Posterior vena cava (tissue), 2 donors: ENCODE measurements at regions of chr5 and their contacts with region 1.

Region 1: GRCh38 chr5:12413585-12413984 is 509.3 kb upstream of the CTNND2 start:
- DNase-seq: no peak

Region 2: GRCh38 chr5:12313602-12314001 is 100.0 kb before region 1 on chr5:
- intact Hi-C with region 1: no loop called
- DNase-seq: no peak

Region 3: DNA sequence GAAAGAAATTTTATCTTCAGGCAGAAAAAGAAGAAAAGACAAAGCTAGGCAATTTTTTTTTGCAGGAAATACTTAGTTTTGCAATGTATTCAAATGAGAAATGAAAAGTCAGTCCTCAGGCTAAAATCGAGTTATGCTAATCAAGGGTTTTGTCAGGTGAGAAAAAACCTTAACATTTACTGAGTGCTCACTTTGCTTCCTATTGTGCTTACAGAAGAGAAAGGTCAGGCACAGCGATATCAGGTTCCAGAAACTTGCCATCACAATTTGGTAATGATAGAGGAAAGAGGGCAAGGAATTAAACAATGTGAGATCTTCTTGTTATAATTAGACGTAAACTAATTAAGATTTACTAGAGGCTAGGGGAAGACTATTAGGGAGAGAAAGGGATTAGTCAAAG is 77.6 kb before region 1 on chr5:
- intact Hi-C with region 1: loop called in 1 of 2 experiments (anchors 2 kb)
- DNase-seq: no peak

Region 4: DNA sequence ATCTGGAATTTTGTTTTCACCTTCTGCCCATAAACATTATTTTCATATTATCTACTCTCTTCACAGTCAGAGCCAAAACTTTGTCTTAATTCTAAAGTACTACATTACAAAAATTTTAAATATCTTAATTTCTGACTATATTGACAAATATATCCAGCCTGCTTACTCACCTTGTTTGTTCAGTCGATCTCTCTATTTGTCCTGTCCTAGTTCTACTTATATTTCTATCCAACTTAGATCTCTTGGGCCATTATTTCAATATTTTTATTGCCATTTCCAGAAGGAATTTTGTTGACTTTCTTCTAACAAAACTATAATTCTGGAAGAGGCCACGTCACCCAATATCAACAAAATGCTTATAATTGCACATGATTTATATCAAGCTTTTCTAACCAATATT is 143.4 kb after region 1 on chr5:
- intact Hi-C with region 1: no loop called
- DNase-seq: no peak